ENCODE measurements at regions of chr2 and their contacts with region 1.

Region 1: DNA sequence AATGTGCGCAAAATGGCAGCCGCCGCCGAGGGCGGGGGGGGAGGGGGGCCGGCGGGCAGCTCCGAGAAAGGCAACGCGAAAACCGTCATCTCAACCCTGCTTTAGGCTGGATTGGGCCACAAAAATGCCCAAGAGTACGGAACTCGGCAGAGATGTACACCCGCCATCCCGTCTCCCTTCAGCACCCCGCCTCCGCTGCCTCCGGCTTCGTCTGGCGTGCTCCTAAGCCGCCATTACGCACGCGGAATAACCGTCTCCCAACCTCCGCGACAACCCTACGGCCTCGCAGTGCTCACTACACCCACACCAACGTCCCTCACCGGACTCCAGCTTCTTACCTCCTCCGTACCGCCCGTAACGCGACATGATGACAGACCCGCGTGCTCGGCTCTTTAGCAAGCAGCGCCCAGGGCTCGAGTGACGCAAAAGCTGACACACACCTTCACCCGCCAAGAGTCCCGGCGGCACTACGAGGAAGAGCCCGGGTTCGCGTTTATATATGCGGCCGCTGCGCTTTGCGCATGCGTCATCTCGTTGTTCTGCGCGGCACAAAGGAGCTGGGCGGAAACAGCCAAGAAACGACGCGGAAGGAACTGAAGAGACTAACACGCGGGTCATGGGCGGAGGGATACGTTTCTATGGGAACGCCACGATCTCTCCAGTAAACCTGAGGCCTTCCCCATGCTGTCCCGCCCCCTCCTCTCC is at the start of gene SRSF7:
- DNase-seq: peak; percentile 96 to 100 (median 99)
- ATAC-seq: peak; percentile 77
- H3K4me3 ChIP-seq: peak within 1 kb of the TSS; percentile 92
- H3K4me3 Mint-ChIP-seq: peak within 1 kb of the TSS; percentile 99
- H3K27ac ChIP-seq: peak within 1 kb of the TSS; percentile 97
- H3K27ac Mint-ChIP-seq: peak within 1 kb of the TSS; percentile 94
- H3K4me1 ChIP-seq: peaks cover 42% of the 10 kb centered on the region
- H3K4me1 Mint-ChIP-seq: peaks cover 63% of the 10 kb centered on the region
- H3K27me3 ChIP-seq: no peaks in the 10 kb centered on the region
- H3K27me3 Mint-ChIP-seq: peaks cover 4% of the 10 kb centered on the region
- CTCF ChIP-seq: no peak
- total RNA-seq, gene SRSF7: 550 to 557 TPM

Region 2: GRCh38 chr2:37925063-37925897 is 825.8 kb before region 1 on chr2 and contains the start of gene RMDN2:
- CTCF ChIA-PET with region 1: no interaction called
- POLR2A ChIA-PET with region 1: interaction called, 6 read pairs
- intact Hi-C with region 1: loop called in 1 of 2 experiments (anchors 10 kb)
- DNase-seq: peak; percentile 48 to 86 (median 71)
- ATAC-seq: peak; percentile 83
- H3K4me3 ChIP-seq: peak within 1 kb of the TSS; percentile 82
- H3K4me3 Mint-ChIP-seq: peak within 1 kb of the TSS; percentile 93
- H3K27ac ChIP-seq: peak within 1 kb of the TSS; percentile 37 to 62
- H3K27ac Mint-ChIP-seq: peak within 1 kb of the TSS; percentile 79
- H3K4me1 ChIP-seq: peaks cover 6% of the 10 kb centered on the region
- H3K4me1 Mint-ChIP-seq: peaks cover 36% of the 10 kb centered on the region
- H3K27me3 ChIP-seq: no peaks in the 10 kb centered on the region
- H3K27me3 Mint-ChIP-seq: no peaks in the 10 kb centered on the region
- CTCF ChIP-seq: no peak
- total RNA-seq, gene RMDN2: 2.4 to 3.3 TPM

Region 3: DNA sequence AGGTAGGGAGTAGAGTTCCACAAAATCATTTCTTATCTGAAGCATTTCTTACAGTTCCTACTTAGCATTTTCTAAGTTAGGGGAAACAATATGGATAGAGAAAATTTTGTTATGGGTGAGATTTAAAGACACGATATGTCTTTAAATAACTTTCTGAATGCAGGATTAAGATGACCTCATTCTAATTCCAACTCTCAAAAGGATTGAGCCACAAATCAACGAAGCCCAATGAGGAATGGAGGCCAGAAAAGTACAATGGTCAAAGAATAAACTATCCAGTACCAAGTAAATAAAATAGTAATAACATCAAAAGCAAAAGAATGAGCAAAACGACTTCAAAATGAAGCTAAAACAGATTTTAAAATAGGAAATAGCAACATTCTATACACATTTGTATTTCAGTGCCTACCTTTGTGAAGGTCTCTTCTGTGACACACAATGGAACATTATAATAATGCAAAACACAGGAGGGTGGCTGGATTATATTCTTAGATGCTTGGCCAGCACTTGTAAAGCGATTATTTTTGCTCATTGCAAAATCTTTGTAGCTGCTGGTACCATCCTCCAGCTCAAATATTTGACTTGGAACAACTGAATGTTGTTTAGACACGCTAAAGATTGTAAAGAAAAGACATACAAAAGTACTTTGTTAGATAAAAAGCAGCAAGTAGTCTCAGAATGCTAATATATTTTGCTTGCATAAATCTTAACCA is 182.2 kb before region 1 on chr2:
- CTCF ChIA-PET with region 1: interaction called, 5 read pairs
- POLR2A ChIA-PET with region 1: interaction called, 14 read pairs
- intact Hi-C with region 1: no loop called
- DNase-seq: no peak
- ATAC-seq: no peak
- H3K4me3 ChIP-seq: no peak overlapping the region
- H3K4me3 Mint-ChIP-seq: no peak overlapping the region
- H3K27ac ChIP-seq: no peak overlapping the region
- H3K27ac Mint-ChIP-seq: no peak overlapping the region
- H3K4me1 ChIP-seq: no peaks in the 10 kb centered on the region
- H3K4me1 Mint-ChIP-seq: peaks cover 5% of the 10 kb centered on the region
- H3K27me3 ChIP-seq: no peaks in the 10 kb centered on the region
- H3K27me3 Mint-ChIP-seq: no peaks in the 10 kb centered on the region
- CTCF ChIP-seq: no peak

Region 4: GRCh38 chr2:38602732-38603401 is 148.2 kb before region 1 on chr2 and contains the start of gene HNRNPLL:
- CTCF ChIA-PET with region 1: interaction called, 7 read pairs
- POLR2A ChIA-PET with region 1: interaction called, 136 read pairs
- intact Hi-C with region 1: no loop called
- DNase-seq: peak; percentile 87 to 96 (median 94)
- ATAC-seq: peak; percentile 80
- H3K4me3 ChIP-seq: peak within 1 kb of the TSS; percentile 62
- H3K4me3 Mint-ChIP-seq: peak within 1 kb of the TSS; percentile 99
- H3K27ac ChIP-seq: peak within 1 kb of the TSS; percentile 58 to 66
- H3K27ac Mint-ChIP-seq: peak within 1 kb of the TSS; percentile 97
- H3K4me1 ChIP-seq: peaks cover 28% of the 10 kb centered on the region
- H3K4me1 Mint-ChIP-seq: peaks cover 56% of the 10 kb centered on the region
- H3K27me3 ChIP-seq: no peaks in the 10 kb centered on the region
- H3K27me3 Mint-ChIP-seq: no peaks in the 10 kb centered on the region
- CTCF ChIP-seq: no peak
- total RNA-seq, gene HNRNPLL: 44.9 to 46.5 TPM

Region 5: DNA sequence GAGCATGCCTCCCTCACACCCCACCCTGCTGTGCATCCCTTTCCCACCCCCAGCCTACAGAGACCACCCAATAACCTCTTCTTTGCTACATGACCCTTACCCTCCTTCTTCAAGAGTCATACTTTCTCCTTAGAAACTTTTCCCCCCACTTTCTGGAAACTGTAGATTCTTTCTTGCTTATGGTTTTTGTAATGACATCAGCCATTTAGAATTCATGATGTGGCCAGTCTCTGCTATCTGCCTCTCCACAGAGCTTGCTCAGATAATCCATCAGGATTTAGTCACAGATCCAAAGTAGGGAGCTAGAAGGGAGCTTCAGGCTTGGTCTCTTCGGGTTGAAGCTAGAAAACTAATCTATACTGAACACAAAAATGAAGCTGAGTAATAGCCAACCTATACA is 48.6 kb before region 1 on chr2:
- CTCF ChIA-PET with region 1: no interaction called
- POLR2A ChIA-PET with region 1: interaction called, 11 read pairs
- intact Hi-C with region 1: no loop called
- DNase-seq: no peak
- ATAC-seq: no peak
- H3K4me3 ChIP-seq: no peak overlapping the region
- H3K4me3 Mint-ChIP-seq: peak overlapping the region; percentile 58
- H3K27ac ChIP-seq: no peak overlapping the region
- H3K27ac Mint-ChIP-seq: peak overlapping the region; percentile 85
- H3K4me1 ChIP-seq: peaks cover 59% of the 10 kb centered on the region
- H3K4me1 Mint-ChIP-seq: peaks cover 63% of the 10 kb centered on the region
- H3K27me3 ChIP-seq: no peaks in the 10 kb centered on the region
- H3K27me3 Mint-ChIP-seq: no peaks in the 10 kb centered on the region
- CTCF ChIP-seq: no peak

Region 6: DNA sequence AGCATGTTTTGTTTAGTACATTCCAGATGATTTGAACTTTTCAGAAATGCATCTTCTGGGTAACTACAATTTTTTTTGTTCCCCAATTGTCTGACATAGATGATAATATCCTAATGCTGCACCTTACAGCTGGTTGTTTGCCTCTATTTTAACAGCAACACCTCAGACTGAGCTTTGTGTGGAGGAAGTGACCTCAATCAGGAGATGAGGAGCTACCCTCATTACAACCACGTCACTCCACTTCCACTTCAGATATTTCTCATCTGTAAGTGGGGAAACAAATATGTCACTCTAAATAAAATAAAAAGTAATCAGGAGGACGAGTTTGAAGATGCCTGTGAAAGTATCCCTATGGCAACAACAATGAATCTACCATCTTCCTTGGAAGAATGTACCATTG is 12.2 kb after region 1 on chr2:
- CTCF ChIA-PET with region 1: no interaction called
- POLR2A ChIA-PET with region 1: interaction called, 18 read pairs
- intact Hi-C with region 1: no loop called
- DNase-seq: no peak
- ATAC-seq: peak; percentile 80
- H3K4me3 ChIP-seq: no peak overlapping the region
- H3K4me3 Mint-ChIP-seq: no peak overlapping the region
- H3K27ac ChIP-seq: no peak overlapping the region
- H3K27ac Mint-ChIP-seq: no peak overlapping the region
- H3K4me1 ChIP-seq: no peaks in the 10 kb centered on the region
- H3K4me1 Mint-ChIP-seq: no peaks in the 10 kb centered on the region
- H3K27me3 ChIP-seq: no peaks in the 10 kb centered on the region
- H3K27me3 Mint-ChIP-seq: no peaks in the 10 kb centered on the region
- CTCF ChIP-seq: no peak

Region 7: GRCh38 chr2:39124000-39124745 is 373.1 kb after region 1 on chr2:
- CTCF ChIA-PET with region 1: no interaction called
- POLR2A ChIA-PET with region 1: interaction called, 25 read pairs
- intact Hi-C with region 1: no loop called
- DNase-seq: peak; percentile 89 to 98 (median 94)
- ATAC-seq: peak; percentile 74
- H3K4me3 ChIP-seq: peak overlapping the region; percentile 83
- H3K4me3 Mint-ChIP-seq: peak overlapping the region; percentile 96
- H3K27ac ChIP-seq: peak overlapping the region; percentile 88 to 89
- H3K27ac Mint-ChIP-seq: peak overlapping the region; percentile 99
- H3K4me1 ChIP-seq: peaks cover 50% of the 10 kb centered on the region
- H3K4me1 Mint-ChIP-seq: peaks cover 63% of the 10 kb centered on the region
- H3K27me3 ChIP-seq: no peaks in the 10 kb centered on the region
- H3K27me3 Mint-ChIP-seq: no peaks in the 10 kb centered on the region
- CTCF ChIP-seq: peak; percentile 67

Measured in CD4-positive, alpha-beta T cell (primary cell).